ENCODE measurements at regions of chr7 and their contacts with region 1.

Region 1: GRCh38 chr7:144827621-144828020 is 8.2 kb downstream of the TPK1 start:
- DNase-seq: peak; percentile 83 to 89
- H3K4me3 ChIP-seq: no peak overlapping the region
- H3K4me3 Mint-ChIP-seq: peak overlapping the region; percentile 59
- H3K27ac Mint-ChIP-seq: peak overlapping the region; percentile 69
- H3K4me1 ChIP-seq: peaks cover 58% of the 10 kb centered on the region
- H3K4me1 Mint-ChIP-seq: peaks cover 25% of the 10 kb centered on the region
- H3K27me3 ChIP-seq: no peaks in the 10 kb centered on the region
- H3K27me3 Mint-ChIP-seq: no peaks in the 10 kb centered on the region
- CTCF ChIP-seq: no peak

Region 2: GRCh38 chr7:144786522-144786921 is 41.1 kb before region 1 on chr7:
- CTCF ChIA-PET with region 1: no interaction called
- POLR2A ChIA-PET with region 1: no interaction called
- intact Hi-C with region 1: loop called (anchors 2 kb)
- DNase-seq: no peak
- H3K4me3 ChIP-seq: no peak overlapping the region
- H3K4me3 Mint-ChIP-seq: no peak overlapping the region
- H3K27ac Mint-ChIP-seq: no peak overlapping the region
- H3K4me1 ChIP-seq: peaks cover 22% of the 10 kb centered on the region
- H3K4me1 Mint-ChIP-seq: peaks cover 6% of the 10 kb centered on the region
- H3K27me3 ChIP-seq: no peaks in the 10 kb centered on the region
- H3K27me3 Mint-ChIP-seq: no peaks in the 10 kb centered on the region
- CTCF ChIP-seq: peak; percentile 6 to 10

Region 3: DNA sequence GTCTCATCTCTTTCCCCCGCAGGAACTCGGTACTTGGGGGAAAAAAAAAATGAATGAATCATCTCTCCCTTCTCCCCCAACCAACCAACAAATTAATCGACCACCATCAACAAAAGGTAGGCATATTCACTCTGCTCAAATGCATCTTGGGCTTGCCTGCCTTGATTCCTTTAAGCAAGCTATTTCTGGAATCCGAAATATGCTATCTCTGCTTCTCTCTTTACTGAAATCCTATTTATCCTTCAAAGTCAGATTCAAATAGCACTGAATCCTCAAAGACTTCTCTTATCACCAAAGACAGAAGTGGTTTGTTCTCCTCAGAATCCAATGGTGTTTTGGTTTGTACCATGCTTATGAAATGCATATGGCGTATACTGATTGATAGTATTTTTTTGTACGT is 57.9 kb after region 1 on chr7:
- CTCF ChIA-PET with region 1: no interaction called
- POLR2A ChIA-PET with region 1: no interaction called
- intact Hi-C with region 1: loop called (anchors 1 kb)
- DNase-seq: peak in 1 of 2 experiments; percentile 23
- H3K4me3 ChIP-seq: no peak overlapping the region
- H3K4me3 Mint-ChIP-seq: peak overlapping the region; percentile 48
- H3K27ac Mint-ChIP-seq: peak overlapping the region; percentile 83
- H3K4me1 ChIP-seq: peaks cover 23% of the 10 kb centered on the region
- H3K4me1 Mint-ChIP-seq: peaks cover 21% of the 10 kb centered on the region
- H3K27me3 ChIP-seq: no peaks in the 10 kb centered on the region
- H3K27me3 Mint-ChIP-seq: no peaks in the 10 kb centered on the region
- CTCF ChIP-seq: no peak

Measured in Caco-2 (cell line).